Left ventricle myocardium superior (tissue), 1 donor: ENCODE measurements at regions of chr10 and their contacts with region 1.

Region 1: DNA sequence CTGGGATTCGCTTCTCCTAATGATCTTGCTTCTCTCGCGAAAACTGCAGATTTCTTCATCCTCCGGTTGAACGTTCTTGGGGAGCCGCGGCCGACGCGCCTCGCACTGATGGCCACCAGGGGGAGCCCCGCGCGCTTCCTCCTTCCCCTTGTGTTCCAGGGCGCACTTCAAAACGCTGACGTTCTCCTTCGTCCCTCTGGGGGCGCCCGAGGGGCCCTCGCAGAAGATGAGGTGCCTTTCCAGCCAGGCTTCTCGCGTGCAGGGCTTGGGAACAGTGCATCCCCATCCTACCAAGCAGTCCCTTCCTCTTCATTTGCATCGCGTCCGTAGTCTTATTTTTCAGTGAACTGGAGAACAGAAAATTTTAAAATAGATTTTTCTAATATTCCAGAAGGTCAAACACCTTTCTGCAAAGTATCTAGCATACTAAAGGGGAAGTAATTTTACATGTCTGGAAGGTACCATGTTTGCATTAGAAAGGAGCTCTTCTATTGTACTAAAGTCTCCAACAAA is 22.5 kb downstream of the GSTO2 start:
- DNase-seq: peak; percentile 94
- ATAC-seq: peak; percentile 97

Region 2: GRCh38 chr10:104328896-104329710 is 37.6 kb after region 1 on chr10:
- intact Hi-C with region 1: no loop called
- DNase-seq: peak; percentile 61
- ATAC-seq: peak; percentile 16

Region 3: GRCh38 chr10:104350127-104350635 is 58.7 kb after region 1 on chr10:
- intact Hi-C with region 1: loop called (anchors 2 kb)
- DNase-seq: no peak
- ATAC-seq: peak; percentile 70